ENCODE measurements at regions of chr7 and their contacts with region 1.

Region 1: GRCh38 chr7:29337546-29338116 is 143.1 kb downstream of the CHN2 start:
- DNase-seq: peak in 6 of 9 donors; percentile 24 to 68 (median 45)
- ATAC-seq: peak; percentile 90
- H3K4me3 ChIP-seq: no peak overlapping the region
- H3K4me3 Mint-ChIP-seq: peak overlapping the region; percentile 5 to 73 (median 50)
- H3K27ac ChIP-seq: no peak overlapping the region
- H3K27ac Mint-ChIP-seq: peak overlapping the region in 8 of 9 donors; percentile 11 to 83 (median 68)
- H3K4me1 ChIP-seq: peaks cover 15 to 24% of the 10 kb centered on the region in 2 donors
- H3K4me1 Mint-ChIP-seq: peaks cover 12 to 28% (median 22%) of the 10 kb centered on the region in 7 donors
- H3K27me3 ChIP-seq: no peaks in the 10 kb centered on the region
- H3K27me3 Mint-ChIP-seq: peaks cover 0 to 6% (median 0%) of the 10 kb centered on the region in 5 donors

Region 2: GRCh38 chr7:28921822-28922221 is 415.8 kb before region 1 on chr7:
- CTCF ChIA-PET with region 1: no interaction called
- POLR2A ChIA-PET with region 1: no interaction called
- intact Hi-C with region 1: loop called in 1 of 2 experiments (anchors 5 kb)
- DNase-seq: peak in 7 of 9 donors; percentile 17 to 56 (median 39)
- ATAC-seq: peak; percentile 88
- H3K4me3 ChIP-seq: no peak overlapping the region
- H3K4me3 Mint-ChIP-seq: peak overlapping the region in 1 of 10 donors; percentile 16
- H3K27ac ChIP-seq: no peak overlapping the region
- H3K27ac Mint-ChIP-seq: no peak overlapping the region
- H3K4me1 ChIP-seq: peaks cover 0 to 8% of the 10 kb centered on the region in 2 donors
- H3K4me1 Mint-ChIP-seq: peaks cover 0 to 23% (median 14%) of the 10 kb centered on the region in 7 donors
- H3K27me3 ChIP-seq: no peaks in the 10 kb centered on the region
- H3K27me3 Mint-ChIP-seq: peaks cover 0 to 22% (median 0%) of the 10 kb centered on the region in 5 donors

Region 3: DNA sequence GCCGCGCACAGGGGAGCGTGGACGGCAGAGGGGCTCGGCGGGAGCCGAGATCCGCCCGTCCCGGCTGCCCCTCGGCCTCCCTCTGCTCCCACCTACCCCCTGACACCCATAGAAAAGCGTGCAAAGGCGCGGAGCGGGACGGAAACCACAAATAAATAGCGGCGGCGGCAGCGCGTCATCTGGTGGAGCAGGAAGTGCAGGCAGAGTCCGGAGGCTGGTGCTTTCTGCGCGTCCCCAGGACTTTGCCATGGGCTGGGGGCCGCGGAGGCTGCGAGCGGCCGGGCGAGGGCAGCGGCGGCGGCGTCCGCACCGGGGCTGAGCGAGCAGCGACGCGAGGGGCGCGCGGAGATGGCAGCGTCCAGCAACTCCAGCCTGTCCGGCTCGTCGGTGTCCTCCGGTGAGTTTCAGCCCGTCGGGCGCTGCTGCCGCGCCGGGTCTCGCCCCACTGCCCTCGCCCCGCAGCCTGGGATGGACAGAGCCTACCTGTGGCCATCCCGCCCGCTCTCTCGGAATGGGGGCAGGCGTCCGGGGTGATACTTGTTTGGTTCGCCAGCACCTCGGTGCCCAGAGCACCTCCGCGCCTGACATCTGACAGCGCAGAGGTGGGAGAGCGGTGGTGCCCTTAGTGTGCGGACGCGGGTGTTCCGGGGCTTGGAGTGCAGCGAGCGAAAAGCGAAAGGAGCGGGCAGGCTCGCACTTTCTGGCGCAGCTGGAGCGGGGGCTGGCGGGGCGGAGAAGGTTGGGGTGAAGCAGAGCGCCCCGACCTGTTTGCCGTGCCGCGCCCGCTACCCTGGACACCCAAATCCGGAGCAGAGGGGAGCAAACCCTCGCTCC is 142.8 kb before region 1 on chr7 and contains the start of gene CHN2:
- CTCF ChIA-PET with region 1: no interaction called
- POLR2A ChIA-PET with region 1: no interaction called
- intact Hi-C with region 1: loop called (anchors 2 to 10 kb)
- DNase-seq: peak in 8 of 9 donors; percentile 12 to 45 (median 22)
- ATAC-seq: peak; percentile 77
- H3K4me3 ChIP-seq: peak within 1 kb of the TSS; percentile 40
- H3K4me3 Mint-ChIP-seq: peak within 1 kb of the TSS; percentile 64 to 91 (median 82)
- H3K27ac ChIP-seq: no peak within 1 kb of the TSS
- H3K27ac Mint-ChIP-seq: peak within 1 kb of the TSS in 3 of 9 donors; percentile 47 to 79 (median 68)
- H3K4me1 ChIP-seq: peaks cover 0 to 26% of the 10 kb centered on the region in 2 donors
- H3K4me1 Mint-ChIP-seq: peaks cover 8 to 29% (median 17%) of the 10 kb centered on the region in 7 donors
- H3K27me3 ChIP-seq: no peaks in the 10 kb centered on the region
- H3K27me3 Mint-ChIP-seq: peaks cover 43 to 75% (median 55%) of the 10 kb centered on the region in 5 donors
- total RNA-seq, gene CHN2: 0.34 to 28.1 (median 1.8) TPM

Region 4: DNA sequence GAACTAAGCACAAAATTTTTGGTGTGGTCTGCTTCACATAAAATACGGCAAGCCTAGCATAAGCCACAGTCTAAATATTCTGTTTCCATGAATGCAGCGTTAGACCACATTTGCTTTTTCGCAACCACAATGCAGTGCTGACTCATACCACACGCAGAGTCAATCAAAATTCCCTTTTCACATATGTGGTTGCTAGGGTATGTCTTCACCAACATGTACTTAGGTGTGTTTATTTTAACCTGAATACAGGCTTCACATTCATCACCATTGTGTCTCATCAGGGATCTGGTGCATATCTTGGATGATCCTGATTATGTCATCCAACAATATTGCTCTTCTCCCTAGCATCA is 52.2 kb before region 1 on chr7:
- CTCF ChIA-PET with region 1: no interaction called
- POLR2A ChIA-PET with region 1: no interaction called
- intact Hi-C with region 1: loop called in 1 of 2 experiments (anchors 1 kb)
- DNase-seq: peak in 1 of 9 donors; percentile 36
- ATAC-seq: peak; percentile 75
- H3K4me3 ChIP-seq: no peak overlapping the region
- H3K4me3 Mint-ChIP-seq: peak overlapping the region in 1 of 10 donors; percentile 4
- H3K27ac ChIP-seq: no peak overlapping the region
- H3K27ac Mint-ChIP-seq: peak overlapping the region in 1 of 9 donors; percentile 1
- H3K4me1 ChIP-seq: peaks cover 0 to 24% of the 10 kb centered on the region in 2 donors
- H3K4me1 Mint-ChIP-seq: peaks cover 0 to 13% (median 0%) of the 10 kb centered on the region in 7 donors
- H3K27me3 ChIP-seq: no peaks in the 10 kb centered on the region
- H3K27me3 Mint-ChIP-seq: peaks cover 0 to 58% (median 5%) of the 10 kb centered on the region in 5 donors